MCF 10A (cell line): ENCODE measurements at regions of chr7 and their contacts with region 1.

Region 1: GRCh38 chr7:15764851-15765382 is 78.4 kb upstream of the MEOX2 start:
- DNase-seq: no peak
- H3K4me3 Mint-ChIP-seq: no peak overlapping the region
- H3K27ac Mint-ChIP-seq: no peak overlapping the region
- H3K4me1 Mint-ChIP-seq: no peaks in the 10 kb centered on the region
- H3K27me3 Mint-ChIP-seq: peaks cover 25% of the 10 kb centered on the region
- CTCF ChIP-seq: no peak

Region 2: DNA sequence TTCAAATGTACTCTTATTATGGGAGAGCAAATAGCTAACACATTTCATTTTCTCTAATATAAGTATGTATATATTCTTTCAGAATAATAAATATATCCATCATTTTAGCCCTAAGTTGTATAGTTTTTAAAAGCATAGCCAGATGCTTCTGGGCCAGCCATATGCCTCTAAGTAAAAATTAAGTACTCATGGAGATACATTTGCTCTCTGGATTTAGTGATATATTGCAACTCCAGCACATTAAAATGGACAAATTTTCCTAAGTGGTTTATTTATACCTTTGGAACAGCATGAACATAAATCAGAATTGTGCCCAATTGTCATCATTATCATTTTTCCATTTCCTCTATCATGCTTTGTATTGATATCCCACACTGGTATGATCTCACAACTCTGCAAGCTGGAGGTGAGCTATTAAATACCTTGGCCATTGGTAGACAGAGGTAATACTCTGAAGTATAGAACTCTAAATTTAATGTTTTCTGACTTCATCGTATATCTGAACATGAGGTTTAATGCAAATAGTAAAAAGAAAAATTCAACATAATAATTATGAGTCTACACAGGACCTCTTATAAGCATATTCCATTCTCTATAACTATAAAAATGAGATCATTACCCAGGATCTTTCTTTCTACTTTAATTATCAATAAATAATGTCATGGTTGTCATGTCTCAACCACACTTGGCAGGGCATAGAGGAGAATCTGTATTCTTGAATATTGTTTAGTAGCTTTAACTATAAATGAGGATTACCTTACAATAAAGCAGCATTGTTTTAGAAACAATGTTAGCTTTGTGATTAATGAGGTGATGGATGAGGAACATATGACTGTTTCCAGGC is 293.9 kb before region 1 on chr7:
- CTCF ChIA-PET with region 1: no interaction called
- POLR2A ChIA-PET with region 1: no interaction called
- intact Hi-C with region 1: loop called (anchors 5 kb)
- DNase-seq: no peak
- H3K4me3 Mint-ChIP-seq: no peak overlapping the region
- H3K27ac Mint-ChIP-seq: no peak overlapping the region
- H3K4me1 Mint-ChIP-seq: no peaks in the 10 kb centered on the region
- H3K27me3 Mint-ChIP-seq: peaks cover 58% of the 10 kb centered on the region
- CTCF ChIP-seq: no peak

Region 3: DNA sequence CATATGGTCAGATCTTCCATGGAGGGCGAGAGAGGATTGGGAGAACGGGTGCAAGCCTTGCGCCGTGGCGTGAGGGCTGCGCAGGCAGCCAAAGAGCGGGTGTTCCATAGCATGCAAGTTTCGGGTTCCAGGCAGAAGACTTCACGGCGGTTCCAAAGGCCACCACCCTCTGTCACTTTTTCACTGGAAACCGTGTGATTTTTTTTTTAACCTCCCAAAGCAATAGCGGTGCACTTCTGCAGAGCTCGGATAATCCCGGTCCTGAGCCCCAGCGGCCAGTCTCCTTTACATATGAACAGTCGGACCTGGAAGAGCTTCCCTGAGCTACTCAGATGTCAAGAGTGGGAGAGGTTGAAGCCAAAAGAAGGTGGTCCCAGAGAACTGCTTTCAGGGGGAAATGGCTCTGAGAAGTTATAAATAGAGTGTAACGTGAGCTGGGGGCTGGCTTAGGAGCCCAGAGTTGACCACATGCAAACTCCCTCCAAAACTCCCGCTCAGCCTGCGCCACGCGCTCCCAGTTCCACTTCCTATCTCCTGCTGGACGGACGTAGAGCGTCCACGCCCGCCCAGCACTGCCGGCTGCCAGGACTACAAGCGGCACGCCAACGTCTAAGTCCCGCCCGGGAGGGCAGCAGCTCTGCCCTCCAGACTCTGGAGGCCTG is 78.5 kb before region 1 on chr7 and contains the start of gene MEOX2:
- CTCF ChIA-PET with region 1: no interaction called
- POLR2A ChIA-PET with region 1: no interaction called
- intact Hi-C with region 1: no loop called
- DNase-seq: no peak
- H3K4me3 Mint-ChIP-seq: no peak within 1 kb of the TSS
- H3K27ac Mint-ChIP-seq: no peak within 1 kb of the TSS
- H3K4me1 Mint-ChIP-seq: no peaks in the 10 kb centered on the region
- H3K27me3 Mint-ChIP-seq: peaks cover 69% of the 10 kb centered on the region
- CTCF ChIP-seq: no peak
- total RNA-seq, gene MEOX2: not detected in 2 replicates

Region 4: GRCh38 chr7:15795393-15795792 is 30.5 kb after region 1 on chr7:
- CTCF ChIA-PET with region 1: no interaction called
- POLR2A ChIA-PET with region 1: no interaction called
- intact Hi-C with region 1: no loop called
- DNase-seq: no peak
- H3K4me3 Mint-ChIP-seq: no peak overlapping the region
- H3K27ac Mint-ChIP-seq: no peak overlapping the region
- H3K4me1 Mint-ChIP-seq: no peaks in the 10 kb centered on the region
- H3K27me3 Mint-ChIP-seq: peaks cover 48% of the 10 kb centered on the region
- CTCF ChIP-seq: no peak